GM18951 (cell line): ENCODE measurements at regions of chrX and their contacts with region 1.

Region 1: GRCh38 chrX:118847676-118848075 is 24.1 kb downstream of the ZCCHC12 start:
- POLR2A ChIP-seq: no peak

Region 2: DNA sequence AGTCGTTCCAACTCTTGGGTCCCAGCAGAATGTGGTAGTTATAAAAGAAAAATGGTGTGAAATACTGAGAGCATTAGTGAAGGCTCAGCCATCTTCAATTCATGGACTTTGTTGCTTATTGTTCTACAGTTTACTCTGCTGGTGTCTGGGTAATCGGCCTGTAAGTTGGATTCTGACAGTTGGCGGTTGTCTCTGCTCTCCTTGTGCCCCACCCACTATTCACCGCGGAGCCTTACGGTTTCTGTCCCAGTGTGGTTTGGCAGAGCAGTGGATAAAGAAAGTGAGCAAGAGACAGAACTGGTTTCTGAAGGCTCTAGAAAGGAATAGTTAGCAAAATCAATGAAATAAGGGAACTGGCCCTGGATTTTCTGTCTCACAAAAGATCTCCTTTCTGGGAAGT is 135.8 kb after region 1 on chrX:
- in situ Hi-C with region 1: loop called (anchors 10 kb)
- POLR2A ChIP-seq: no peak

Region 3: GRCh38 chrX:119105826-119106225 is 258.1 kb after region 1 on chrX:
- in situ Hi-C with region 1: no loop called
- POLR2A ChIP-seq: no peak